ENCODE measurements at regions of chr3 and their contacts with region 1.

Region 1: GRCh38 chr3:147356909-147357900 is 49.1 kb downstream of the ZIC4 start:
- DNase-seq: no peak
- H3K4me3 Mint-ChIP-seq: no peak overlapping the region
- H3K27ac Mint-ChIP-seq: no peak overlapping the region
- H3K4me1 Mint-ChIP-seq: no peaks in the 10 kb centered on the region
- H3K27me3 Mint-ChIP-seq: peaks cover 67% of the 10 kb centered on the region

Region 2: GRCh38 chr3:147391781-147392624 is 34.8 kb after region 1 on chr3:
- CTCF ChIA-PET with region 1: no interaction called
- POLR2A ChIA-PET with region 1: no interaction called
- intact Hi-C with region 1: loop called (anchors 5 kb)
- DNase-seq: no peak
- H3K4me3 Mint-ChIP-seq: no peak overlapping the region
- H3K27ac Mint-ChIP-seq: no peak overlapping the region
- H3K4me1 Mint-ChIP-seq: peaks cover 3% of the 10 kb centered on the region
- H3K27me3 Mint-ChIP-seq: peaks cover 74% of the 10 kb centered on the region